ENCODE measurements at regions of chr12 and their contacts with region 1.

Region 1: GRCh38 chr12:93397412-93397811 is 19.7 kb downstream of the NUDT4 start:
- DNase-seq: no peak
- H3K4me3 Mint-ChIP-seq: no peak overlapping the region
- H3K27ac Mint-ChIP-seq: no peak overlapping the region
- H3K4me1 Mint-ChIP-seq: peaks cover 3% of the 10 kb centered on the region
- H3K27me3 Mint-ChIP-seq: no peaks in the 10 kb centered on the region

Region 2: DNA sequence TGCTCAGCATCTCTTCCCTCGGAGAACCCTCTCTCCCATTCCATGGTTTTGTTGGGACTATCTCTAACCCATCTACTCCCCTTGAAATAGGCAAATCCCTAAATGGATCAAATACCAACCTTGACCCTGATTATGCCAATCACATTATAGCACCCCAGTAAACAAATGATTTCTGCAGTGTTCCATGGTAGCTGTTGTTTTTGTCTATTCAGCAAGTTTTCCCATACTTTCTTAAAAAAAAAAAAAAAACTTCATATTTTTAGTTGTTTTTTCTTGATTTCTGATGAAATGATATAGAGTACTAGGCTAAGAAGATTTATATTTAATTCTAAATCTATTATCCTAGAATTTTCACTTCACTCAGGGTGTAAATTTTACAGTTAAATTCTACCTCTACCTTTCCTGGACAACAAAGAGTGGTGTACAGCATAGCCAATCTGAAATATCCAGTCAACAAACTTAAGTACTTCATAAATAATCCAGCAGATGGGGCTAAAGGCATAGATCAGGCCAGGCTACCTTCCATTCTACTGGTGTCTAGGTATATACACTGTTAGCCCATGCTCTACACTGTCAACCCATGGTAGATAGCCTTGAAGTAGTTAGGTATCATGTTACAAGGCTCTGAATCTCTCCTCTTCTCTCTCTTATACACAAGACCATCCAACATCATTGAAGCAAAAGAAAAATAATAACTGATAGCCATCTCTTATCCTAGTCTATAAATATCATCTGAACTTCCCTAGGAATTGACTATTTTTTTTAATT is 612.4 kb before region 1 on chr12:
- intact Hi-C with region 1: loop called (anchors 1 kb)
- DNase-seq: no peak
- H3K4me3 Mint-ChIP-seq: no peak overlapping the region
- H3K27ac Mint-ChIP-seq: no peak overlapping the region
- H3K4me1 Mint-ChIP-seq: peaks cover 1% of the 10 kb centered on the region
- H3K27me3 Mint-ChIP-seq: no peaks in the 10 kb centered on the region

Region 3: DNA sequence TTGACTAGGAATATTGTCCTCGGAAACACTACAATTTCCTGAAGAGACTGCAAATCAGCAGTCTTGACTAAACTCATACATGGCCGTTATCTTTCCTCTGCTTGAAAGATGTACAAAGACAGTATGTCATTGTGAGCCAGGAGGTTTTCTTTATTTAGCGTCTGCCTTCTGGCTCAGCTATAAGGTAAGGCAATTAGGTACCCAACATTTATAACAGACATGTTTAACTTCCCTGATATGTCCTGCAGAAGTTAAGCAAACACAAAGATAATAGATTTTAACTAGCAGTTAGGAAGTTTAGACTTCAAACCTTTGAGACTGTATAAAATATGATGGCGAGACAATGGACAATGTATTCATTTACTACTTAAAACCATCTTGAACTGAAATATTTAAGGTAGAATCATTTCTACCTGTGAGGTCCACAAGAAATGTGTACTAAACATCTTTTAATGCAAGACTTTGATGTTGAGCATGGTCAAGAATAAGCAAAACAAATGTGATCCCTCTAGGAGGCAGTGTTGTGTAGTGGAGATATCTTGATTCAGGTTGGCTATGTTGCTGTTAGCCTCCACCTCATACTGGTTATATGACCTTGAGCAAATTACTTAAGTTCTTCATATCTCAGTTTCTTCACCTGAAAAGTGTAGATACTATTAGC is 372.1 kb before region 1 on chr12:
- intact Hi-C with region 1: loop called (anchors 2 kb)
- DNase-seq: no peak
- H3K4me3 Mint-ChIP-seq: no peak overlapping the region
- H3K27ac Mint-ChIP-seq: no peak overlapping the region
- H3K4me1 Mint-ChIP-seq: peaks cover 2% of the 10 kb centered on the region
- H3K27me3 Mint-ChIP-seq: no peaks in the 10 kb centered on the region

Region 4: DNA sequence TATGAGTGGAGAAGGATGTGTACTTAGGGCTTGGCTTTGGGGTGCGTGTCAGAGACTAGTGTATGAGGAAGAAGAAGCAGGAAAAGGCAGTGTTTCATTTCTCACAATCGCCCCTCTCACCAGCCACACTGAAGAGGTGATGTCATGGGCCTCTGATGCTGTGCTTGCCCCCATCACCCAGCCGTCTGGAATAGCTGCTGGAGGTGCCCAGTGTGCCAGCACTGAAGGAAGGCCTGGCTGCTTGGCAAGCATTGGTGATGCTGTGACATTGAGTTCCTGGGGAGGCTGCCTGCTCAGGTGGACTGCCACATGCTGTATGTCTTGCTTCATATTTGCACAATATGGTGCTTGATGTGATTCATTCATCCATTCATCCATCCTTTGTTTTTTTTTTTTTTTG is 335.9 kb after region 1 on chr12:
- intact Hi-C with region 1: no loop called
- DNase-seq: no peak
- H3K4me3 Mint-ChIP-seq: no peak overlapping the region
- H3K27ac Mint-ChIP-seq: no peak overlapping the region
- H3K4me1 Mint-ChIP-seq: peaks cover 2% of the 10 kb centered on the region
- H3K27me3 Mint-ChIP-seq: peaks cover 4% of the 10 kb centered on the region